ENCODE measurements at regions of chr12 and their contacts with region 1.

Region 1: DNA sequence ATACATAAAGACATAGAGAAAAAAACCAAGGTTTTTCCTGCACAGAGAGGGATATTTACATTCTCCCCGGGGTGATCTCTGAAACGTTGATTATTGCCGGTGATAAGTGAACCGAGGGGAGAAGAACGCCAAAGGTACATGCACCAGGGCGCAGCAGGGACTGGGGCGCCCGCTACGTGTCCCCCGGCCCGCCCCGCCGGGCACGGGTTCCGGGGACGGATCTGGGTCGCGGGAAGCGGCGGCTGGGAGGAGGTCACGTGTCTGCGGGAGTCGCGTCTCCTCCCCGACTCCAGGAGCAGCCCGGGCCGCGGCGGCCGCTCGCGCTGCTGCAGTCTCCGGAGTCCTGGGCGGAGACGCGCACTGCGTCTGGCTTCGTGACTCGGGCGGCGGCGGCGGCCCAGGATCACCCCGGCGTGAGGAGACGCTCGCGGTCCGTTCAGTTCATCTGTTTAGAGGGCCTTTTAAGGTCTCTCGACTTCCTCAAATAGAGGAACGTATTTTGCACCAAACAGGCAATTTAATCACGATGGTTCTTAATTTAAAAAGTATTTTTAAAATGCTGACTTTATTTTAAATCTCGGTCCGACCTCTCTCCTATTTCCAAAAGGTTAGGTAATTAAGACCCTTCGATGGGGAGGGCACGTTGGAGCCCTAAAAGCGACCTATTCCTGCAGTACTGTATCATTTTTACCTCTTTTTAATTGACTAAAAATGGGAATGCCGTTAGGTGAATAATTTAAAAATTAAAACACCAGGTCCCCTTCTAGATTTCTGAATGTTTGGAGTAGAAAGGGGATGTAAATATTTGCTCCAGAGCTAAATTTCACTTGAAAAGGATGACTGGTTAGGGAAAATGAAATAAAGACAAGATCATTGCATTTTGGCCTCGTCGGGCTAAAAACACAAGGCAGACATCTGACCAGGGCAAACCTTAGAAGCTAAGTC is 1.8 kb upstream of the BHLHE41 start:
- DNase-seq: peak; percentile 64
- H3K4me3 ChIP-seq: peak overlapping the region; percentile 39 to 64 (median 49)
- H3K27ac ChIP-seq: no peak overlapping the region
- H3K4me1 ChIP-seq: peaks cover 23% of the 10 kb centered on the region
- H3K27me3 ChIP-seq: peaks cover 35 to 60% of the 10 kb centered on the region in 2 experiments
- CTCF ChIP-seq: no peak
- POLR2A ChIP-seq: no peak

Region 2: GRCh38 chr12:26195641-26196420 is 69.2 kb after region 1 on chr12:
- CTCF ChIA-PET with region 1: interaction called, 12 read pairs
- POLR2A ChIA-PET with region 1: no interaction called
- dilution Hi-C with region 1: no loop called
- intact Hi-C with region 1: loop called (anchors 5 kb)
- DNase-seq: peak; percentile 47
- H3K4me3 ChIP-seq: peak overlapping the region; percentile 0 to 59 (median 31)
- H3K27ac ChIP-seq: no peak overlapping the region
- H3K4me1 ChIP-seq: peaks cover 4% of the 10 kb centered on the region
- H3K27me3 ChIP-seq: no peaks in the 10 kb centered on the region
- CTCF ChIP-seq: no peak
- POLR2A ChIP-seq: no peak

Region 3: GRCh38 chr12:26298785-26299621 is 172.4 kb after region 1 on chr12:
- CTCF ChIA-PET with region 1: interaction called, 4 read pairs
- POLR2A ChIA-PET with region 1: no interaction called
- dilution Hi-C with region 1: no loop called
- intact Hi-C with region 1: loop called (anchors 5 kb)
- DNase-seq: peak; percentile 80
- H3K4me3 ChIP-seq: peak overlapping the region in 1 of 3 experiments; percentile 66
- H3K27ac ChIP-seq: peak overlapping the region; percentile 71
- H3K4me1 ChIP-seq: peaks cover 7% of the 10 kb centered on the region
- H3K27me3 ChIP-seq: no peaks in the 10 kb centered on the region
- CTCF ChIP-seq: peak; percentile 25 to 39
- POLR2A ChIP-seq: no peak

Region 4: DNA sequence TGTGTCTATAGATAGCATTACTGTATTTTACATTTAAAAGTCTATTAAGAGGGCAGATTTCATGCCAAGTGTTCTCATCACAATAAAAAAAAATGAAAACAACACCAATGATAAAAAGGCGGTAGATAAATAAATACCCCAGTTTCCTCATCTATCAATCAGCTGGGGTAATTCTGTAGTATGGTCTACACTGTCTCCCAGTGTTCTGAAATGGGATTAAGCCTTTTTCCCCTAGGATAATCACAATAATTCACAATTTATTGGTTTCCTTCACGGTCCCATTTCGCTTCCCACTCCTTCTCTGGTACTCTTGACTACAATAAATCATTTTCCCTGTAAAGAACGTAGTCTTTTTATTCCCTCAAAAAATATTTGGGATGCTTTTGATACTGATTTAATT is 183.0 kb after region 1 on chr12:
- CTCF ChIA-PET with region 1: no interaction called
- POLR2A ChIA-PET with region 1: no interaction called
- dilution Hi-C with region 1: no loop called
- intact Hi-C with region 1: no loop called
- DNase-seq: no peak
- H3K4me3 ChIP-seq: no peak overlapping the region
- H3K27ac ChIP-seq: no peak overlapping the region
- H3K4me1 ChIP-seq: no peaks in the 10 kb centered on the region
- H3K27me3 ChIP-seq: no peaks in the 10 kb centered on the region
- CTCF ChIP-seq: no peak
- POLR2A ChIP-seq: no peak

Region 5: GRCh38 chr12:26523708-26524150 is 397.1 kb after region 1 on chr12:
- CTCF ChIA-PET with region 1: no interaction called
- POLR2A ChIA-PET with region 1: no interaction called
- dilution Hi-C with region 1: no loop called
- intact Hi-C with region 1: loop called (anchors 10 kb)
- DNase-seq: peak; percentile 43
- H3K4me3 ChIP-seq: no peak overlapping the region
- H3K27ac ChIP-seq: no peak overlapping the region
- H3K4me1 ChIP-seq: peaks cover 8% of the 10 kb centered on the region
- H3K27me3 ChIP-seq: no peaks in the 10 kb centered on the region
- CTCF ChIP-seq: no peak
- POLR2A ChIP-seq: no peak

Measured in endothelial cell of umbilical vein (primary cell).